Sigmoid colon (tissue), 7 donors: ENCODE measurements at regions of chr7 and their contacts with region 1.

Region 1: GRCh38 chr7:22726345-22727185 is 435 bp upstream of the IL6 start:
- DNase-seq: peak; percentile 83
- H3K4me3 ChIP-seq: peak overlapping the region; percentile 11 to 44 (median 36)
- H3K27ac ChIP-seq: peak overlapping the region; percentile 68 to 81 (median 73)
- H3K4me1 ChIP-seq: peaks cover 0 to 62% (median 60%) of the 10 kb centered on the region in 4 donors
- H3K27me3 ChIP-seq: no peaks in the 10 kb centered on the region
- CTCF ChIP-seq: peak in 3 of 4 experiments; percentile 48 to 54 (median 52)
- EP300 ChIP-seq: no peak
- POLR2A ChIP-seq: no peak

Region 2: GRCh38 chr7:21427182-21427870 is 1299.2 kb before region 1 on chr7:
- intact Hi-C with region 1: loop called (anchors 10 kb)
- DNase-seq: peak; percentile 99
- H3K4me3 ChIP-seq: peak overlapping the region; percentile 55 to 91 (median 74)
- H3K27ac ChIP-seq: peak overlapping the region; percentile 91 to 99 (median 98)
- H3K4me1 ChIP-seq: peaks cover 0 to 44% (median 28%) of the 10 kb centered on the region in 4 donors
- H3K27me3 ChIP-seq: no peaks in the 10 kb centered on the region
- CTCF ChIP-seq: no peak
- EP300 ChIP-seq: peak in 2 of 4 donors; percentile 4 to 32
- POLR2A ChIP-seq: peak; percentile 27 to 59

Region 3: GRCh38 chr7:22559829-22560489 is 166.6 kb before region 1 on chr7:
- intact Hi-C with region 1: loop called (anchors 2 kb)
- DNase-seq: peak; percentile 84
- H3K4me3 ChIP-seq: no peak overlapping the region
- H3K27ac ChIP-seq: peak overlapping the region in 1 of 4 donors; percentile 83
- H3K4me1 ChIP-seq: peaks cover 0 to 30% (median 20%) of the 10 kb centered on the region in 4 donors
- H3K27me3 ChIP-seq: no peaks in the 10 kb centered on the region
- CTCF ChIP-seq: peak; percentile 86 to 90 (median 88)
- EP300 ChIP-seq: no peak
- POLR2A ChIP-seq: no peak

Region 4: DNA sequence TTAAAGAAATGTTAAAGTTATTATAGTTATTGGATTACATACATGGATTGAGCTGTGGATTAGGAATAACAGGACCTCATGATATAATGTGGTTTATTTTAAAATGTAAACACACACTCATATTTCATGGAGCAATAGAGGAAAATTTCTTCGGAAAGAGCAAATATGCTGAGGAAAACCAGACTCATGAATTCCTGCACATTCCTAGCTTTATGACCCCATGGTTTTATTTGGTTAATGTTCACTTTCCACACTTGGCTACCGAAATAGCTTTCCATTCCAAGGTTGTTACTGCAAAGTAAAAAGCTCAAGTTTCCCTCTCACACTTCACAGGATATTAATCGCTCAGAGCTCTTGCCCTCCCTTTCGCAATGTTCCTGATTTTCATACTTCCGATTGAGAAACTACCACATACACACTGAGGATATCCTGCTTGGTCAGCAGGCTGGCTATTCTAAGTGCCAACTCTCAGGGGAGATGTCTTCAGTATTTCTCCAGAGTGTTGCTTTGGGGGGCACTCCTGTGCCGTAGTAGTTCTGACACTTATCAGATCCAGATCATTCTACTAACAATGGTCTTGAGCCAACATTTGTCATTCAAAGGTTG is 149.1 kb before region 1 on chr7:
- intact Hi-C with region 1: loop called (anchors 5 kb)
- DNase-seq: peak; percentile 79
- H3K4me3 ChIP-seq: no peak overlapping the region
- H3K27ac ChIP-seq: peak overlapping the region; percentile 53 to 79 (median 74)
- H3K4me1 ChIP-seq: peaks cover 0 to 37% (median 20%) of the 10 kb centered on the region in 4 donors
- H3K27me3 ChIP-seq: no peaks in the 10 kb centered on the region
- CTCF ChIP-seq: no peak
- EP300 ChIP-seq: peak in 2 of 4 donors; percentile 61 to 68
- POLR2A ChIP-seq: no peak

Region 5: DNA sequence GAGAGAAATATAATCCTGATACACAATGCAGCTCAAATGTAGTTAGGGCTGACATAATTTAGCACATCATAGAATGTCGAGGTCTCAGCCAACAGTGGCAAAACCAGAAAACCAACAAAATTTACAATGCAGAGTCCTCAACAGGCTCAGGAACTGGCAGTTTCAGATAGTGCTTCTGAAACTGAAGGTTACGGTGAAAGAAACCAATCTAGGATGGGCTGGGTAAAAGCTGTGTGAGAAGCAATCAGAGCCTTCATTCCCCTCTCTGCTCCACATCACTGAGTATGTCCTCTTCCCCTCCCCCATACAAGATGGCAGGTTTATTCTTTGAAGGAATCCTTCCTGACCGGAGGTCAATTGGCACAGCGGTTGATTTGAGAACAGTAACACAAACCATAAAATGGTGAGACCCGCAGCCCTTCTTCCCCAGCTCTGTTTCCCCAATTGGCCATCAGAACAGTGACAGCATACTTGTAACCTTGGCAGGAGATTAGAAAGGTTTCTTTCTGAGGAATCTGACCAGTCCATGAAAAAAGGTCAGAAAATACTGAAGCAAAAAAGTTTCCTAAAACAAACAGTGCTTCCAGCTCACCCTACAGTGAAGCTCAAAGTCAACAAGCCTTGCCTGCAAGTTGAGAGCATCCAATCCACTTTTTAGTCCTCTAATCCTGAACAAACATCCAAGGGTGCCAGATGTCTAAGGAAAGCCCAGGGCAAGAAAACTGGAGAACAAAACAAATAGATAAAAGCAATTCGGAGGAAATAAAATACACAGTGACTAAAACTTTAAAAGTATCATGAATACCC is 53.5 kb before region 1 on chr7:
- intact Hi-C with region 1: no loop called
- DNase-seq: no peak
- H3K4me3 ChIP-seq: no peak overlapping the region
- H3K27ac ChIP-seq: no peak overlapping the region
- H3K4me1 ChIP-seq: peaks cover 0 to 5% (median 0%) of the 10 kb centered on the region in 4 donors
- H3K27me3 ChIP-seq: no peaks in the 10 kb centered on the region
- CTCF ChIP-seq: no peak
- EP300 ChIP-seq: no peak
- POLR2A ChIP-seq: no peak

Region 6: GRCh38 chr7:22782616-22783232 is 56.2 kb after region 1 on chr7:
- intact Hi-C with region 1: loop called (anchors 5 kb)
- DNase-seq: peak; percentile 77
- H3K4me3 ChIP-seq: no peak overlapping the region
- H3K27ac ChIP-seq: no peak overlapping the region
- H3K4me1 ChIP-seq: peaks cover 0 to 3% (median 0%) of the 10 kb centered on the region in 4 donors
- H3K27me3 ChIP-seq: no peaks in the 10 kb centered on the region
- CTCF ChIP-seq: peak in 3 of 4 experiments; percentile 14 to 72 (median 53)
- EP300 ChIP-seq: no peak
- POLR2A ChIP-seq: no peak

Region 7: DNA sequence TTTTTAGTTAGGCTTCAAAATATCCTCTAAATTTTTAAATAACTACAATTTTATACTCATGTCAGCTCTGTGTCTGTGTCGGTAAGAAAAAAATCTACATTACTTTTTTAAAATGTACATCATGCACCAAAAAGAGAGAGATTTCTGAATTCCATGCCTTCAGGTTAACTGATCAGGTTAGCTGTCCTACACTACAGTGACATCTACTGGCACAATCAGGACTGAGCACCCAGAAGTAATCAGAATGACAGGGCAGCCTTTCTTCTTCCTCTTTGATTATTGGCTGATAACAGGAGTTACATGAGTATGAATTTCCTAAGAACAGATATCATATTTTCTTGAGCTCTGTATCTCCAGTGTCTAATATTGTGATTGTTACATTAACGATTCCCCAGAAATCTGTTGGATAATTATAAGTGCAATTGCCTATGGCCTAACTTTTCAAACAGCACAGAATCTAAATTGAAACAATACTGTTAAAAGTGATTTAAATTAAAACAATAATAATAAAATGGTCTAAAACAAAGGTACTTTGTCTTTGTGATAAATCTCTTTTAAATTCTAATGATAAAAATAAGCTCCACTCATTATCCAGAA is 329.1 kb after region 1 on chr7:
- intact Hi-C with region 1: loop called (anchors 5 kb)
- DNase-seq: no peak
- H3K4me3 ChIP-seq: no peak overlapping the region
- H3K27ac ChIP-seq: no peak overlapping the region
- H3K4me1 ChIP-seq: peaks cover 0 to 4% (median 0%) of the 10 kb centered on the region in 4 donors
- H3K27me3 ChIP-seq: no peaks in the 10 kb centered on the region
- CTCF ChIP-seq: peak; percentile 52 to 85 (median 72)
- EP300 ChIP-seq: no peak
- POLR2A ChIP-seq: no peak